HepG2 (cell line): ENCODE measurements at regions of chr3 and their contacts with region 1.

Region 1: DNA sequence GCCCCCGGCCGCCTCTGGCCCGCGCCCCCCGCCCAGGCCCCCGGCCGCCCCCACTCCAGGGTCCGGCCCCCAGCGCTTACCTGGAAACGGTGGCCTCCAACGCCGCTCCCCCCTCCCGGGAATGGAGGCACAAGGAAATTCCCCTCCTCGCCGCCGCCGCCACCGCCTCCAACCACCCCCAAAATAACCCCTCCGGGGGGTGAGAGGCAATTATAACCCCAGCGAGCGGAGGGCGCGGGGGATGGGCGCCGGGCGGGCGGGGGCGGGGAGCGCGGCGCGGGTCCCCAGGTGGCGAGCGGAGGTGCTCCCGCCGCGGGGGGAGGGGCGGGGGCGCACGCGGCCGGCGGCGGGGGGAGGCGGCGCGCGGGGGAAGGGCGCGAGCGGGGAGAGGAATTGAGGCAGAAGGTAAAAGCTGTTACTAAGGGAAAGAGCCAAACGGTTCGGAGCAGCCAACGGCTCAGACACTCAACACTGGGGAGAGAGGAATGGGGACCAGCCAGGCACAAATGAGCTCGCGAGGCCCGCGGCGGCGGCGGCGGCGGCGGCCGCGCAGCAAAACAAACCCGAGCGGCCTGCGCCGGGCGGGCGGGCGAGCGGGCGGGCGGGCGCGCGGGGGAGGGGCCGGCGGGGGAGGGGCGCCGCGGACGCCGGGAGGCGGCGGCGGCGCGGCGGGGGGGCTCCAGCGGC is at the start of gene TBL1XR1:
- DNase-seq: peak; percentile 85
- ATAC-seq: peak; percentile 75
- H3K4me3 ChIP-seq: peak within 1 kb of the TSS; percentile 82 to 98 (median 93)
- H3K27ac ChIP-seq: peak within 1 kb of the TSS; percentile 98
- H3K4me1 ChIP-seq: peaks cover 36% of the 10 kb centered on the region
- H3K27me3 ChIP-seq: no peaks in the 10 kb centered on the region; a peak in 1 of 5 replicates
- CTCF ChIP-seq: no peak
- EP300 ChIP-seq: 0 out of 4 replicates have a peak, but pooled peaks of 1 of the 2 experiments have one; percentile 12
- POLR2A ChIP-seq: peak; percentile 37 to 49; a peak in 2 of 4 replicates
- RAD21 ChIP-seq: no peak
- total RNA-seq, gene TBL1XR1: 62.5 and 108 TPM in 2 replicates

Region 2: DNA sequence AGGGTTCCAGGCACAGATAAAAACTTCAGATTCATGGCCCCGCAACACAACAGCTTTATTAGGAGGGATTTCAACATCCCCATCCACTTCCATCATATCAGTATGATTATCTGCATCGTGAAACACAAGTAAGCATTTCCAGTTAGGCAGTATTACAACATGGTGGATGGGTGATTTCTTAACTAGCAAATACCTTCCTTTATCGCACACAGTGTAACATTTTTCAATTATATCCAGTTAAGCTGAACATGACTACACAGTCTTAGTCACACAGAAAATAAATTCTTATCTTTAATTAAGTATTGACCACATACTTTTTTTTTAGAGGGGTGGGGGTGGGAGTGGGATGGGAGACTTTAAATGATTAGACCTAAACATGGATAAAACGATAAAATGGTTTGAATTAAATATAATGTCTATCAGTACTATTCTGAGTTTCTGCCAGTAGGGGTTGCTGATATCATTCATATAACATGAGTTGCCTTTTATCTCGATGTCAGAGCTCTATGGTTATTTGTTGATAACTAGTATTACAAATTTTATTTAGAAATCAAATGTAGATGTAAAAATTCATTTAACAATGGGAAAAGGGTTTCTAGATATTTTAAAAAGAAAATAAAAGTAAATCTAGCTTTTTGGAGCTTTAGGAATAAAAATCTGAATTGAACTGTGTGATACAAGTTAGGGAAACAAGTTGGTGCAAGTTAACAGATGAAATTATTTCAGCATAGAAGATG is 146.5 kb before region 1 on chr3:
- CTCF ChIA-PET with region 1: no interaction called
- POLR2A ChIA-PET with region 1: no interaction called
- in situ Hi-C with region 1: loop called (anchors 10 kb)
- intact Hi-C with region 1: loop called (anchors 2 kb)
- DNase-seq: peak; percentile 13
- ATAC-seq: no peak
- H3K4me3 ChIP-seq: no peak overlapping the region
- H3K27ac ChIP-seq: no peak overlapping the region
- H3K4me1 ChIP-seq: no peaks in the 10 kb centered on the region
- H3K27me3 ChIP-seq: no peaks in the 10 kb centered on the region
- CTCF ChIP-seq: peak; percentile 38
- EP300 ChIP-seq: no peak
- POLR2A ChIP-seq: no peak
- RAD21 ChIP-seq: no peak

Region 3: GRCh38 chr3:177150970-177151627 is 46.1 kb before region 1 on chr3:
- CTCF ChIA-PET with region 1: no interaction called
- POLR2A ChIA-PET with region 1: interaction called, 3 read pairs
- in situ Hi-C with region 1: no loop called
- intact Hi-C with region 1: loop called (anchors 5 kb)
- DNase-seq: peak; percentile 18
- ATAC-seq: peak; percentile 40
- H3K4me3 ChIP-seq: no peak overlapping the region
- H3K27ac ChIP-seq: peak overlapping the region; percentile 57
- H3K4me1 ChIP-seq: peaks cover 44% of the 10 kb centered on the region
- H3K27me3 ChIP-seq: no peaks in the 10 kb centered on the region
- CTCF ChIP-seq: no peak
- EP300 ChIP-seq: no peak
- POLR2A ChIP-seq: no peak
- RAD21 ChIP-seq: no peak

Region 4: DNA sequence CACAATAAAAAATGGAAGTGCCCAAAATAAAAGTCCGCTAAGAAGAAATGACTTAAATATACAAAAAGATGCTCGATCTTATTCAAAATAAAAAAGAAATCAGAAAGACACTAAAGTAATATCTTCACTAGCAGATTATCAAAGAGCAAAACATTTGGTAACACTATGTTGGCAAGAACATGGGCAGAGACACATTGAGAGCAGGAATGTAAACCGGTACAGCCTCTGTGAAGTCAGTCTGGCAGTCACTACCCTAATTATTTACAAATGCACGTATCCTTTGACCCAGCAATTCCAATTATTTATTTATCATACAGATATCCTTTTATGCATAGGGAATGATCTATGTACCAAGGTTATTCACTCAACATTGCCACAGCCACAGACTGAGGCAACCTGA is 34.4 kb before region 1 on chr3:
- CTCF ChIA-PET with region 1: no interaction called
- POLR2A ChIA-PET with region 1: no interaction called
- in situ Hi-C with region 1: no loop called
- intact Hi-C with region 1: no loop called
- DNase-seq: no peak
- ATAC-seq: no peak
- H3K4me3 ChIP-seq: no peak overlapping the region
- H3K27ac ChIP-seq: no peak overlapping the region
- H3K4me1 ChIP-seq: peaks cover 4% of the 10 kb centered on the region; the same call in 1 of the 2 replicates
- H3K27me3 ChIP-seq: no peaks in the 10 kb centered on the region
- CTCF ChIP-seq: no peak
- EP300 ChIP-seq: no peak
- POLR2A ChIP-seq: no peak
- RAD21 ChIP-seq: no peak

Region 5: DNA sequence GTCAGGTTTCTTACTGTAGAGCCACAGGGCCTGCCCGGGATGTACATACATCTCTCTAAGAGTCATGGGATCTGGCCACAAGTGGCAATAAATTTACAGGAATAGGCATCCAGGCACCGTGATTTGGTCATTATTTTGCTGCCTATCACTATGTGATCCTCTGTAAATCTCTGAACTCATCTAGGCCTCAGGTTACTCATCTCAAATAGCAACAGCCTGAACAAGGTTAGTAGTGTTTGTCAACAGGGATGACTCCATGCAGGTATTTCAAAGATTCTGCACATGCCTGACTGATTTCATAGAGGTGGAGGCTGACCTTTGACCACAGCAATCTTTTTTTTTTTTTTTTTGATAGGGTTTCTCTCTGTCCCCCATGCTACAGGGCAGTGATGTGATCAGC is 88.8 kb after region 1 on chr3:
- CTCF ChIA-PET with region 1: no interaction called
- POLR2A ChIA-PET with region 1: no interaction called
- in situ Hi-C with region 1: no loop called
- intact Hi-C with region 1: loop called (anchors 5 kb)
- DNase-seq: peak; percentile 91
- ATAC-seq: peak; percentile 93
- H3K4me3 ChIP-seq: no peak overlapping the region
- H3K27ac ChIP-seq: peak overlapping the region; percentile 38
- H3K4me1 ChIP-seq: peaks cover 56% of the 10 kb centered on the region
- H3K27me3 ChIP-seq: no peaks in the 10 kb centered on the region
- CTCF ChIP-seq: no peak
- EP300 ChIP-seq: peak in 1 of 2 experiments; percentile 66; a peak in 2 of 4 replicates
- POLR2A ChIP-seq: no peak
- RAD21 ChIP-seq: no peak

Region 6: GRCh38 chr3:177378168-177378567 is 181.0 kb after region 1 on chr3:
- CTCF ChIA-PET with region 1: no interaction called
- POLR2A ChIA-PET with region 1: no interaction called
- in situ Hi-C with region 1: no loop called
- intact Hi-C with region 1: loop called (anchors 5 kb)
- DNase-seq: no peak
- ATAC-seq: no peak
- H3K4me3 ChIP-seq: no peak overlapping the region
- H3K27ac ChIP-seq: no peak overlapping the region
- H3K4me1 ChIP-seq: peaks cover 5% of the 10 kb centered on the region; the same call in 1 of the 2 replicates
- H3K27me3 ChIP-seq: peaks cover 0 to 6% of the 10 kb centered on the region in 2 experiments; a peak in 1 of 5 replicates
- CTCF ChIP-seq: no peak
- EP300 ChIP-seq: no peak
- POLR2A ChIP-seq: no peak
- RAD21 ChIP-seq: no peak

Region 7: DNA sequence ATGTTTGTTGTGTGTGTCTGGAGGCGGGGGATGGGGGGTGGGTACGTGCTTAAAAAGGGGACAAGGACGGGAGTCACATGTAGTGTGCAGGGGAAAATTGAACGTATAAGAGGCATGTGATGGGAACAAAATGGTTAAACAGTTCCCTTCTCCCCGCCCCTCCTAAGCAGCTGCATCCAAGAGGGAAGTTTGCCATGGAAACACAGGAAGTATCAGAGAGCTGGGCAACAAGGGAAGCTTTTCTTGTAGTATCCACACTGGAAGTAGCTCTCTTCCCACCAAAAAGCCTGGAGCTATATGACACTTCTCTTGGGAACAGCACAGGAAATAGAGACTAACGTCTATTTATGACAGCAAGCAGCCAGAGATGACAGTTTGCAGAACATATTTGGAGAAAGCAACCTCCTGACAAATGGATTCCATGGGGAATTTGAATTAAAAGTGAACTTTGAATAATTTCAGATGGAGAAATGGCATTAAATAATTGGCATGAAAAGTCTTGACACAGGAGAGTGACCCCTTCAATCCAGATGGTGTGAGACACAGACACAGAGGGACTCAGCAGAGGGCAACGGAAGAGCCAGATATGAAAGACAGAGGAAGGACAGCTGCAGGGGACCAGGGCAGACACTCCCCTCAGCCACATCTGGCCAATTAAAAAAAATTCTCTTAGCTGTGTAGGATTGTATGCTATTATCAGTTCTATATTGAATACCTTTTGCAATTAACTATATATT is 294.3 kb after region 1 on chr3:
- CTCF ChIA-PET with region 1: no interaction called
- POLR2A ChIA-PET with region 1: no interaction called
- in situ Hi-C with region 1: no loop called
- intact Hi-C with region 1: loop called (anchors 10 kb)
- DNase-seq: no peak
- ATAC-seq: no peak
- H3K4me3 ChIP-seq: no peak overlapping the region
- H3K27ac ChIP-seq: no peak overlapping the region
- H3K4me1 ChIP-seq: peaks cover 14% of the 10 kb centered on the region
- H3K27me3 ChIP-seq: no peaks in the 10 kb centered on the region
- CTCF ChIP-seq: no peak
- EP300 ChIP-seq: no peak
- POLR2A ChIP-seq: no peak
- RAD21 ChIP-seq: no peak